ENCODE measurements at regions of chr21 and their contacts with region 1.

Region 1: GRCh38 chr21:42145569-42146272 is 73.2 kb upstream of the ABCG1 start:
- DNase-seq: peak; percentile 17
- ATAC-seq: peak; percentile 92
- H3K4me3 ChIP-seq: no peak overlapping the region
- H3K27ac ChIP-seq: no peak overlapping the region
- H3K4me1 ChIP-seq: no peaks in the 10 kb centered on the region
- H3K27me3 ChIP-seq: no peaks in the 10 kb centered on the region
- CTCF ChIP-seq: peak; percentile 90 to 96 (median 91); a peak in 5 of 6 replicates
- EP300 ChIP-seq: no peak
- POLR2A ChIP-seq: no peak
- RAD21 ChIP-seq: peak; percentile 87

Region 2: GRCh38 chr21:42093991-42094421 is 51.7 kb before region 1 on chr21:
- CTCF ChIA-PET with region 1: no interaction called
- POLR2A ChIA-PET with region 1: no interaction called
- RAD21 ChIA-PET with region 1: no interaction called
- SMC1A ChIA-PET with region 1: no interaction called
- in situ Hi-C with region 1: no loop called
- intact Hi-C with region 1: no loop called
- DNase-seq: no peak
- ATAC-seq: no peak
- H3K4me3 ChIP-seq: no peak overlapping the region
- H3K27ac ChIP-seq: no peak overlapping the region
- H3K4me1 ChIP-seq: no peaks in the 10 kb centered on the region
- H3K27me3 ChIP-seq: no peaks in the 10 kb centered on the region; a peak in 2 of 4 replicates
- CTCF ChIP-seq: no peak
- EP300 ChIP-seq: no peak
- POLR2A ChIP-seq: no peak
- RAD21 ChIP-seq: no peak

Region 3: DNA sequence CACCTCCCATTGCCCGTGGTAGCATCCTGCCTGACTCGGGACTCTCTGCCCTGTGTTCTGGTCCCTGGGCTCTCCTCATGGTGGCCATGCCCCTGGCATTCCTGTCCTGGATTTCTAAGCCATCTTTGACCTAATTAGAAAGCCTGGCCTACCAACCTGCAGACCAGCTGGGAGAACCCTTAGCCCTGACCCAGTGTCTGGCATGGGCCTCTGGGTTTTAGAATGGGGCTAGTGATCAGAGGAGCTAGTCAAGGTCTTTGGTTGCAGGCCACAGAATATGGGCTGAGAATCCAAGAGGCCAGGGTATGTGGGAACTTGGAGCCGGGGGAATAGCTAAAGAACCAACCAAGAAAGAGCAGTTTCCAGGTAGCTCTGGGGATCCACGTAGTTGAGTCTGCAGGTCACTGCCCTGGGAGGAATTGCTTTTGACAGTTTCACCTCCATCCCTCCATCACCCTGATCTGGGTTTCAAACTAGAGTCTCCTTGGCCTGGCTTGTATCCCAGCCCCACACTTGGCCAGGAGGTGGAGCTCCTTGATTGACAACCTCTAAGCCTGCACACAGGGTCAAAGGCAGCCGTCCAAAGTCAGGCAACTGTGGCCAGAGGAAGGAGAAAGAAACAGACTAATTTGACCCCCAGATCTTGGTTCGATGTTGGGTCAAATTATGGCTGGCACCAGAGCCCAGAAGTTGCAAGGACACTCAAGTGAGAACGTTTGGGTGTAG is 18.5 kb after region 1 on chr21:
- CTCF ChIA-PET with region 1: interaction called, 19 read pairs
- POLR2A ChIA-PET with region 1: no interaction called
- RAD21 ChIA-PET with region 1: interaction called, 7 read pairs
- SMC1A ChIA-PET with region 1: interaction called, 3 read pairs
- in situ Hi-C with region 1: no loop called
- intact Hi-C with region 1: no loop called
- DNase-seq: no peak
- ATAC-seq: peak; percentile 99
- H3K4me3 ChIP-seq: no peak overlapping the region
- H3K27ac ChIP-seq: no peak overlapping the region
- H3K4me1 ChIP-seq: no peaks in the 10 kb centered on the region
- H3K27me3 ChIP-seq: peaks cover 2 to 3% of the 10 kb centered on the region in 2 experiments; a peak in 3 of 4 replicates
- CTCF ChIP-seq: peak; percentile 73 to 90 (median 78)
- EP300 ChIP-seq: no peak
- POLR2A ChIP-seq: no peak
- RAD21 ChIP-seq: peak; percentile 99

Region 4: DNA sequence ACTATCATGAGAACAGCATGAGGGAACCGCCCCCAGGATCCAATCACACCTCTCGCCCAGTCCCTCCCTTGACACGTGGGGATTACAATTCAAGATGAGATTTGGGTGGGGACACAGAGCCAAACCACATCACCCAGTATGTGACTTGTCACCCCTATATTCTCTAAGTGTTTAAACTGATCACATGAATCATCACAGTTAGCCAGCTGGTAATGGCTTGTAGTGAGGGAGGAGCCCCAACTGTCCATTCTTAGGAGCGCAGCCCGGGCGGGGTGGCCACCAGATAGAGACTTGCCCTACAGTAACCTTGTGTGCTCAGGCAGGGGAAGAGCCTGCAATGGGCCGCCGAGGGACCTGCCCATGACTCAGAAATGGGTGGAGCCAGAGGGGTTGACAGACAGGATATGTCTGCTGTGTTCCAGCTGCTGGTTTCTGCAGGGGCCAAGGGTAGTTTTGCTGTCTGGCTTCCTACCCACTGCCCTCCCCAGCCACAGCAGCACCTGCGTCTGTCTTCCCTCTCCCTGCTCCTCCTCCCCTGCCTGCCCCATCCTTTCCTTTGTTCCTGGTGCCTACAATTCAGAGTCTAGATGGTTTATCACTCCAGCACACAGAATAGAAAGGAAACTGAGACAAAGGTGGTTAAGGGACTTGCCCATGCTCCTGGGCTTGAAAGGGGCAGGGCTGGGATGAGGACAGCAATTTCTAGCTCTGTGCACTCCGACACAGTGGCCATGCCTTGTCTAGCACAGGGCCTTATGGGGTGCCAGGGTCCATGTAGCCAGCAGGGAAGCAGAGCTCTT is 82.4 kb after region 1 on chr21:
- CTCF ChIA-PET with region 1: interaction called, 12 read pairs
- POLR2A ChIA-PET with region 1: no interaction called
- RAD21 ChIA-PET with region 1: interaction called, 6 read pairs
- SMC1A ChIA-PET with region 1: interaction called, 4 read pairs
- in situ Hi-C with region 1: no loop called
- intact Hi-C with region 1: no loop called
- DNase-seq: peak; percentile 85
- ATAC-seq: peak; percentile 92
- H3K4me3 ChIP-seq: no peak overlapping the region
- H3K27ac ChIP-seq: peak overlapping the region; percentile 22
- H3K4me1 ChIP-seq: peaks cover 31% of the 10 kb centered on the region
- H3K27me3 ChIP-seq: no peaks in the 10 kb centered on the region
- CTCF ChIP-seq: no peak
- EP300 ChIP-seq: peak in 1 of 2 experiments; percentile 55; a peak in 1 of 4 replicates
- POLR2A ChIP-seq: no peak
- RAD21 ChIP-seq: no peak

Region 5: DNA sequence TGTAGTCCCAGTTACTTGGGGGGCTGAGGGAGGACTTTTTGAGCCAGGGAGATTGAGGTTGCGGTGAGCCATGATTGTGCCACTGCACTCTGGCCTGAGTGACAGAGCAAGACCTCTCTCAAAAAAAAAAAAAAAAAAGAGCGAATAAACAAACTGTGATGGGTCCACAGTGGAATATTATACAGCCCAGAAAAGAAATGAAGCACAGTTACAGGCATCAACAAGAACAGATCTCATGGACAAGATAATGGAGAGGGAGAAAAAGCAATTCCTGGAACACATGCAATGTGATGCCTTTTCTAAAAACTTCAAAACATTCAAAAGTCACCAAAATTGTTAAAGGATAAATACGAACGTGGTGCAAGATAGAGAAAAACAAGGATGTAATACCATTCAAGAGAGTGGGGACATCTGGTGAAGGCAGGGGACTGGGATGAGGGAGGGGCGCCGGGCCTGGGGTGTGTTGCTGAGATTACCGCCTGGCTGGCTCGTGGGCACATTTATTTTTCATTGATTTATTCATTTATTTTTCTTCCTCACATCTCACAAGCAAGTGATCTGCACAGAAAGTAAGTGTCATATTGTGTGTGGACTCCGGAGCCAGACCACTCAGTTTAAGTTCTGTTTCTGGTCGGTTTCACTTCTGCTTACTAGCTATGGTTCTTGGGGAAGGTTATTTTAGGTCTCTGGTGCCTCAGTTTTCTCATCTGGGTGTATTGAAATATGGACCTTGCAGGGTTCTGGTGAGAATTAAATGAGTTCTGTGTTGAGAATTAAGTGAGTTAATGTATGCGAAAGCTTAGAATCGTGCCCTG is 103.3 kb after region 1 on chr21:
- CTCF ChIA-PET with region 1: interaction called, 10 read pairs
- POLR2A ChIA-PET with region 1: no interaction called
- RAD21 ChIA-PET with region 1: interaction called, 4 read pairs
- SMC1A ChIA-PET with region 1: interaction called, 6 read pairs
- in situ Hi-C with region 1: no loop called
- intact Hi-C with region 1: no loop called
- DNase-seq: peak; percentile 76
- ATAC-seq: peak; percentile 99
- H3K4me3 ChIP-seq: peak overlapping the region; percentile 1; the same call in 1 of the 2 replicates
- H3K27ac ChIP-seq: peak overlapping the region; percentile 9; the same call in 1 of the 2 replicates
- H3K4me1 ChIP-seq: peaks cover 15% of the 10 kb centered on the region
- H3K27me3 ChIP-seq: no peaks in the 10 kb centered on the region
- CTCF ChIP-seq: no peak
- EP300 ChIP-seq: peak; percentile 44 to 86; a peak in 3 of 4 replicates
- POLR2A ChIP-seq: no peak
- RAD21 ChIP-seq: 0 out of 2 replicates have a peak, but pooled peaks have one; percentile 7

Region 6: GRCh38 chr21:42309753-42310221 is 164.1 kb after region 1 on chr21:
- CTCF ChIA-PET with region 1: interaction called, 23 read pairs
- POLR2A ChIA-PET with region 1: no interaction called
- RAD21 ChIA-PET with region 1: interaction called, 5 read pairs
- SMC1A ChIA-PET with region 1: interaction called, 7 read pairs
- in situ Hi-C with region 1: no loop called
- intact Hi-C with region 1: no loop called
- DNase-seq: no peak
- ATAC-seq: peak; percentile 86
- H3K4me3 ChIP-seq: no peak overlapping the region
- H3K27ac ChIP-seq: no peak overlapping the region
- H3K4me1 ChIP-seq: no peaks in the 10 kb centered on the region
- H3K27me3 ChIP-seq: no peaks in the 10 kb centered on the region
- CTCF ChIP-seq: peak; percentile 77 to 92 (median 90)
- EP300 ChIP-seq: no peak
- POLR2A ChIP-seq: no peak
- RAD21 ChIP-seq: peak; percentile 90

Region 7: GRCh38 chr21:42449296-42449927 is 303.7 kb after region 1 on chr21:
- CTCF ChIA-PET with region 1: interaction called, 16 read pairs
- POLR2A ChIA-PET with region 1: no interaction called
- RAD21 ChIA-PET with region 1: interaction called, 5 read pairs
- SMC1A ChIA-PET with region 1: interaction called, 6 read pairs
- in situ Hi-C with region 1: loop called (anchors 5 kb)
- intact Hi-C with region 1: loop called (anchors 1 kb)
- DNase-seq: no peak
- ATAC-seq: peak; percentile 16
- H3K4me3 ChIP-seq: no peak overlapping the region
- H3K27ac ChIP-seq: peak overlapping the region; percentile 43
- H3K4me1 ChIP-seq: peaks cover 17% of the 10 kb centered on the region
- H3K27me3 ChIP-seq: no peaks in the 10 kb centered on the region
- CTCF ChIP-seq: no peak
- EP300 ChIP-seq: no peak
- POLR2A ChIP-seq: no peak
- RAD21 ChIP-seq: no peak

Region 8: GRCh38 chr21:42818328-42818749 is 672.6 kb after region 1 on chr21:
- CTCF ChIA-PET with region 1: no interaction called
- POLR2A ChIA-PET with region 1: no interaction called
- RAD21 ChIA-PET with region 1: no interaction called
- SMC1A ChIA-PET with region 1: no interaction called
- in situ Hi-C with region 1: loop called (anchors 10 kb)
- intact Hi-C with region 1: loop called (anchors 10 kb)
- DNase-seq: no peak
- ATAC-seq: peak; percentile 91
- H3K4me3 ChIP-seq: no peak overlapping the region
- H3K27ac ChIP-seq: no peak overlapping the region
- H3K4me1 ChIP-seq: no peaks in the 10 kb centered on the region; the same call in 1 of the 2 replicates
- H3K27me3 ChIP-seq: no peaks in the 10 kb centered on the region
- CTCF ChIP-seq: peak; percentile 39 to 82 (median 66)
- EP300 ChIP-seq: no peak
- POLR2A ChIP-seq: no peak
- RAD21 ChIP-seq: peak; percentile 72